Heart right ventricle (tissue), 16 donors: ENCODE measurements at regions of chr19 and their contacts with region 1.

Region 1: DNA sequence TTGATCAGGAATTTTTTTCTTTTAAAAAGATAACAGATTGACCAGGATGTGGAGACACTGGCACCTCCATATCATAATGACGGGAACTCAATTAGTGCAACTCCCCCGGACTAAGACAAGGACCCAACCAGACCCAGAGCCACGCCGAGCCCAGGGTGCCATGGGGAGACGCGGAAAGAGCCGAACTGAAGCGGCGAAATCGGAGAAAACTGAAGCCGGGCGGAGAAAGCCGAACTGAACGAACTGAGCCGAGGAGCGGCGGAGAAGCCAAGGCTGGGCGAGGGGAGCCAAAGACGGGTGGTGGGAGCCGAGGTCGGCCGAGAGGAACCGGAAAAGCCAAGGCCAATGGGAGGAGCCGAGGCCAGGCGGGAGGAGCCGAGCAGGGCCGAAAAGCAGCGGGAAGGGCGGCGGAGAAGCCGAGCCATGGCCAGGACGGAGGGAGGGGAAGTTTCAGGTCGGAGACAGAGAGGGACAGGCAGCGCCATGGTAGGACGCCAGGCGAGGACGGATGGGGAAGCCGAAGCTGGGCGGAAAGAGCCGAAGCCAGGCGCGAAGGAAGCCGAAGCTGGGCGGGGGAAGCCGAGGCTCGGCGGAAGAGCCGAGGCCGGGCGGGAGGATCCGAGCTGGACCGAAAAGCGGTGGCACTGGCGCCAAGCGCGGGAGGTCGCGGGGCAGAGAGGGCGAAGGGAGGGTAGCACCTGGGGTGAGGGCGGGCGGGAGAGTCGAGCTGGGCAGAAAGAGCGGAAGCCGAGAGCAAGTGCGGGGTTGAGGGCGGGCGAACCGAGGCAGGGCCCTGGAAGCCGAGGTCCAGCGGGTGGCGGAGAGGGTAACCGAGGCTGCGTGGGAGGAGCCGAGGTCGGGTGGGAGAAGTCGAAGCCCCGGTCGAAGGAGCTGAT is 29.4 kb downstream of the ZNF557 start:
- DNase-seq: peak; percentile 93 to 95
- ATAC-seq: peak; percentile 94 to 98 (median 96)
- H3K4me3 ChIP-seq: peak overlapping the region; percentile 46 to 89 (median 64)
- H3K27ac ChIP-seq: peak overlapping the region; percentile 83 to 99 (median 94)
- H3K4me1 ChIP-seq: peaks cover 0 to 18% (median 7%) of the 10 kb centered on the region in 9 donors
- H3K27me3 ChIP-seq: no peaks in the 10 kb centered on the region
- CTCF ChIP-seq: no peak

Region 2: DNA sequence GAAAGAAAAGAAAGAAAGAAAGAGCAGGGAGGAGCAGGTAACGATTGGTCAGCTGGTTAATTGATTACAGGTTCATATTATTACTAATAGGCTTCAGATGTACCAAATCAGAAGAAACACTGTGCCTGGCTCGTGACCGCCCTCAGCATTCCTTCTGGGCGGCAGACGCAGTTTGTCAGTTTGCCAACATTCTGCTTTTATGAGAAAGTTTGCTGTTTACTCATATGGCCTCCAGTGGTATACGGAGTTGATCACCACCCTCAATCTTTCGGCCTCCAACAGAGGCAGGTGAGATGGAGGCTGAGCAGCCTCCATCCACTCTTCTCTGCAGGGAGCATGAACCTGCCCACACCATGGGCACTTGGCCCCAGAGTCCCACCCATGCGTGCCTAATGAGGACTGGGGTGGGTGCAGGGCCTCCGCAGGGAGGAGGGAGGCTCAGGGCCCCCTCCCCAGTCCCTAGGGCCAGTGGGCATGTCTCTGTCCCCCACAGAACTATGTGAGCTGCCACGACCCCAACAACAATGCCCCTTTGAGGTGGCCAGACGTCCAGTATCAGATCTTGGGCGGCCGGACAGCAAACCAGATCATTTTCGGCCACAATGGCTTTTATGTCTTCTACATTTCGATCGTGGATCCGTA is 1323.2 kb before region 1 on chr19:
- intact Hi-C with region 1: loop called in 1 of 10 experiments (anchors 5 kb)
- DNase-seq: no peak
- ATAC-seq: no peak
- H3K4me3 ChIP-seq: no peak overlapping the region
- H3K27ac ChIP-seq: no peak overlapping the region
- H3K4me1 ChIP-seq: no peaks in the 10 kb centered on the region
- H3K27me3 ChIP-seq: peaks cover 0 to 7% (median 0%) of the 10 kb centered on the region in 7 donors
- CTCF ChIP-seq: no peak